CD8-positive, alpha-beta T cell (primary cell): ENCODE measurements at regions of chr2 and their contacts with region 1.

Region 1: GRCh38 chr2:159712143-159712928 is at the start of gene MARCHF7:
- DNase-seq: peak; percentile 94 to 99 (median 97)
- ATAC-seq: peak; percentile 90
- H3K4me3 ChIP-seq: peak within 1 kb of the TSS; percentile 100
- H3K4me3 Mint-ChIP-seq: peak within 1 kb of the TSS; percentile 100
- H3K27ac ChIP-seq: peak within 1 kb of the TSS; percentile 98
- H3K27ac Mint-ChIP-seq: peak within 1 kb of the TSS; percentile 100
- H3K4me1 ChIP-seq: peaks cover 45% of the 10 kb centered on the region
- H3K4me1 Mint-ChIP-seq: peaks cover 54% of the 10 kb centered on the region
- H3K27me3 ChIP-seq: no peaks in the 10 kb centered on the region
- H3K27me3 Mint-ChIP-seq: no peaks in the 10 kb centered on the region
- CTCF ChIP-seq: peak; percentile 25
- total RNA-seq, gene MARCHF7: 76.5 to 76.6 TPM

Region 2: GRCh38 chr2:157876066-157876787 is 1836.1 kb before region 1 on chr2 and contains the start of gene ACVR1:
- CTCF ChIA-PET with region 1: no interaction called
- POLR2A ChIA-PET with region 1: no interaction called
- intact Hi-C with region 1: loop called (anchors 5 kb)
- DNase-seq: peak; percentile 37 to 92 (median 78)
- ATAC-seq: peak; percentile 72
- H3K4me3 ChIP-seq: peak within 1 kb of the TSS; percentile 53 to 74
- H3K4me3 Mint-ChIP-seq: peak within 1 kb of the TSS; percentile 94
- H3K27ac ChIP-seq: peak within 1 kb of the TSS; percentile 1 to 29
- H3K27ac Mint-ChIP-seq: peak within 1 kb of the TSS; percentile 90
- H3K4me1 ChIP-seq: peaks cover 10% of the 10 kb centered on the region
- H3K4me1 Mint-ChIP-seq: peaks cover 48% of the 10 kb centered on the region
- H3K27me3 ChIP-seq: no peaks in the 10 kb centered on the region
- H3K27me3 Mint-ChIP-seq: no peaks in the 10 kb centered on the region
- CTCF ChIP-seq: peak; percentile 27
- total RNA-seq, gene ACVR1: 7.0 to 8.3 TPM

Region 3: GRCh38 chr2:159124441-159124911 is 587.9 kb before region 1 on chr2:
- CTCF ChIA-PET with region 1: no interaction called
- POLR2A ChIA-PET with region 1: interaction called, 3 read pairs
- intact Hi-C with region 1: loop called in 1 of 2 experiments (anchors 1 kb)
- DNase-seq: peak in 4 of 9 experiments; percentile 14 to 51 (median 36)
- ATAC-seq: peak; percentile 73
- H3K4me3 ChIP-seq: no peak overlapping the region
- H3K4me3 Mint-ChIP-seq: no peak overlapping the region
- H3K27ac ChIP-seq: no peak overlapping the region
- H3K27ac Mint-ChIP-seq: peak overlapping the region; percentile 84
- H3K4me1 ChIP-seq: peaks cover 13% of the 10 kb centered on the region
- H3K4me1 Mint-ChIP-seq: peaks cover 23% of the 10 kb centered on the region
- H3K27me3 ChIP-seq: no peaks in the 10 kb centered on the region
- H3K27me3 Mint-ChIP-seq: no peaks in the 10 kb centered on the region
- CTCF ChIP-seq: no peak

Region 4: GRCh38 chr2:159516241-159516766 is 196.0 kb before region 1 on chr2:
- CTCF ChIA-PET with region 1: no interaction called
- POLR2A ChIA-PET with region 1: interaction called, 13 read pairs
- intact Hi-C with region 1: loop called (anchors 1 to 2 kb)
- DNase-seq: peak in 3 of 9 experiments; percentile 29 to 84 (median 74)
- ATAC-seq: peak; percentile 96
- H3K4me3 ChIP-seq: peak overlapping the region; percentile 48 to 50
- H3K4me3 Mint-ChIP-seq: peak overlapping the region; percentile 81
- H3K27ac ChIP-seq: peak overlapping the region; percentile 69 to 72
- H3K27ac Mint-ChIP-seq: peak overlapping the region; percentile 95
- H3K4me1 ChIP-seq: peaks cover 19% of the 10 kb centered on the region
- H3K4me1 Mint-ChIP-seq: peaks cover 38% of the 10 kb centered on the region
- H3K27me3 ChIP-seq: no peaks in the 10 kb centered on the region
- H3K27me3 Mint-ChIP-seq: no peaks in the 10 kb centered on the region
- CTCF ChIP-seq: no peak

Region 5: DNA sequence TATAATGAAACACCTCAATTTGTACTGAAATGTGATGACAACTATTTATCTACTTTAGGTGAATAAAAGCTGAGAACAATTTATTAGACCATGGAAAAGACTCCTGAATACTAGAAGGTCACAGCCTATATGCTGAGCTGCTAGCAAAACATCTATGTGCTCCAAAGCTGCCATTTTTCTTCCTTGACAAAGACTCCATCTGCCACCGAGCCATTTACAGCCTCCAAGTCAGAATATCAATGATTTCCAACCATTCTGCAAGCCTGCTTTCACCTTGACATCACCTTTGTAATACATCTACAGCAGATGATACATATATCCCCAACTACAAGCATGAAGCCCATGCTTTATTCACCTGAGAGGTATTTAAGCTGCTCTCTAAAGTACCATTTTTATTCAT is 180.9 kb before region 1 on chr2:
- CTCF ChIA-PET with region 1: no interaction called
- POLR2A ChIA-PET with region 1: no interaction called
- intact Hi-C with region 1: no loop called
- DNase-seq: no peak
- ATAC-seq: no peak
- H3K4me3 ChIP-seq: no peak overlapping the region
- H3K4me3 Mint-ChIP-seq: no peak overlapping the region
- H3K27ac ChIP-seq: no peak overlapping the region
- H3K27ac Mint-ChIP-seq: no peak overlapping the region
- H3K4me1 ChIP-seq: no peaks in the 10 kb centered on the region
- H3K4me1 Mint-ChIP-seq: no peaks in the 10 kb centered on the region
- H3K27me3 ChIP-seq: no peaks in the 10 kb centered on the region
- H3K27me3 Mint-ChIP-seq: no peaks in the 10 kb centered on the region
- CTCF ChIP-seq: no peak

Region 6: DNA sequence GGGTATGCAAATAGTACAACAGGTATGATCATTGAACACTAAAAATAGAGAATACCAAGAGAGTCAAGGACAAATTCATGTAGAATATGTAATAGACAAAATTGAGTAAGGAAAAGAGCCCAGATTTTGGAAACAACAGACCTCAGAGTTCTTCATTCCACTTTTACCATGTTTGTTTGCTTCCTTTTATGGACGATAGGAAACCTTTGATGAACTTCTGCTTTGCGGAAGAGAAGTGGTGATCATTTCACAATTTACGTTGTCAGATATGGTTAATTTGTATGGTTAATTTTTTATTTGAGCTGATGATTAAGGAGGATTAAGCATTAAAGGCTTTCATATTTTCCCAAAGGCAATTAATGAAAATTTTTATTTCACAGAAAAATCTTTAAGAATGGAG is 16.3 kb after region 1 on chr2:
- CTCF ChIA-PET with region 1: no interaction called
- POLR2A ChIA-PET with region 1: interaction called, 9 read pairs
- intact Hi-C with region 1: loop called in 1 of 2 experiments (anchors 1 kb)
- DNase-seq: no peak
- ATAC-seq: no peak
- H3K4me3 ChIP-seq: no peak overlapping the region
- H3K4me3 Mint-ChIP-seq: no peak overlapping the region
- H3K27ac ChIP-seq: no peak overlapping the region
- H3K27ac Mint-ChIP-seq: no peak overlapping the region
- H3K4me1 ChIP-seq: peaks cover 23% of the 10 kb centered on the region
- H3K4me1 Mint-ChIP-seq: peaks cover 58% of the 10 kb centered on the region
- H3K27me3 ChIP-seq: no peaks in the 10 kb centered on the region
- H3K27me3 Mint-ChIP-seq: no peaks in the 10 kb centered on the region
- CTCF ChIP-seq: no peak

Region 7: GRCh38 chr2:159904127-159904958 is 192.0 kb after region 1 on chr2:
- CTCF ChIA-PET with region 1: no interaction called
- POLR2A ChIA-PET with region 1: interaction called, 14 read pairs
- intact Hi-C with region 1: loop called (anchors 1 to 5 kb)
- DNase-seq: peak; percentile 68 to 90 (median 81)
- ATAC-seq: peak; percentile 81
- H3K4me3 ChIP-seq: peak within 1 kb of the TSS; percentile 91 to 97
- H3K4me3 Mint-ChIP-seq: peak within 1 kb of the TSS; percentile 98
- H3K27ac ChIP-seq: peak within 1 kb of the TSS; percentile 90 to 94
- H3K27ac Mint-ChIP-seq: peak within 1 kb of the TSS; percentile 98
- H3K4me1 ChIP-seq: peaks cover 12% of the 10 kb centered on the region
- H3K4me1 Mint-ChIP-seq: peaks cover 46% of the 10 kb centered on the region
- H3K27me3 ChIP-seq: no peaks in the 10 kb centered on the region
- H3K27me3 Mint-ChIP-seq: no peaks in the 10 kb centered on the region
- CTCF ChIP-seq: no peak

Region 8: DNA sequence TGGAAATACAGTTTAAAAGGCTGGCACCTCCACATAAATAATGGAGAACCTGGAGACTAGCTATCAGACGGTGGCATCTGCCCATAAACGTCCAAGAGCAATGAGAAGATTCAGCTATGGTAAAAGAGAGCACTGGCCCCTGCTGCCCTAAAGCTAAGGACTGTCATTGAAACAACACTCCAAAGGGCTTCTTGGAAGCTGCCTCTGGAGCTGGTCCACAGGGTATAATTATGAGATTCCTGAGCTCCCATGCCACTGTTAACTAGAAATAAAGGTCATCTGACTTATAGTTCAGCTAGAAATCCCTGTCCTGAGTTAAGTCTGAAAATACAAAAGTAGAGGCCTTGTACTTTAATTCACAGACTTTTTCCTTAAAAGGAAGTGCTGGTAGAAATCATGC is 821.1 kb after region 1 on chr2:
- CTCF ChIA-PET with region 1: no interaction called
- POLR2A ChIA-PET with region 1: no interaction called
- intact Hi-C with region 1: no loop called
- DNase-seq: no peak
- ATAC-seq: no peak
- H3K4me3 ChIP-seq: no peak overlapping the region
- H3K4me3 Mint-ChIP-seq: no peak overlapping the region
- H3K27ac ChIP-seq: no peak overlapping the region
- H3K27ac Mint-ChIP-seq: no peak overlapping the region
- H3K4me1 ChIP-seq: no peaks in the 10 kb centered on the region
- H3K4me1 Mint-ChIP-seq: peaks cover 5% of the 10 kb centered on the region
- H3K27me3 ChIP-seq: no peaks in the 10 kb centered on the region
- H3K27me3 Mint-ChIP-seq: no peaks in the 10 kb centered on the region
- CTCF ChIP-seq: no peak

Region 9: DNA sequence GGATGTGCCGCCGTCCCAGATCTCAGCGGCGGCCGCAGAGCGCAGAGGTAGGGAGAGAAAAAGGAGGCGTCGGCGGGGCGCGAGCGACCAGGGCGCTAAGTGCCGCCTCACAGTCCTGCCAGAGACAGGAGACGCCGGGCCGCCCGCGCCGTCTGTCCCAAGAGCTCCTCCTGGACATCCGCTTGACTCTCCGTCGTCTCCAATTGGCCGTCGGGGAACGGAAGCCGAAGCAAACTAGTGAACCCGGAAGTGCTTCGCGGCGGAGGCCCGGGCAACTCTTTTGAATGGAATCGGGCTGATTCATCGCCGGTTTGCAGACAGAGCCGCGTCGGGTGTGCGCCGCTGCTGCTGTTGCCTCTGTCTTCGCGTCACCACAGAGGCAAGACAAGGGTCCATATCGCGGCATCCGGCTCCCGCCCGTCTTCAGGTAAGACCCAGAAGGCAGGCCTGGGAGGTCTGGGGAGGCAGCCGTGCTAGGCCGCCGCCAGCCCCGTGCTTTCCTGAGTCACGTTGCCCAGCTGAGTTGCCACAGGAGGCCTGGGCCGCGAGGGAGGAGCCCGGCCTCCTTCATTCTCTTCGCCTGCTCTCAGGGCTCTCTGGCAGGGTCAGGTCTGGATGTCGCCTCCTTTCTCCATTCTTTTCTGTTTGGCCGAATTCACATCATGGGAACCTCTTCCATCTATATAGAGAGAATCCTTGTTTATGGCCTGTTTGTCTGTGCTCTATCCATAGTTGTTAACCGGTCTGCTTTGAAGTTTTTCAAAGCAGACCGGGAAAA is 1596.0 kb after region 1 on chr2 and contains the start of gene PSMD14:
- CTCF ChIA-PET with region 1: no interaction called
- POLR2A ChIA-PET with region 1: no interaction called
- intact Hi-C with region 1: loop called in 1 of 2 experiments (anchors 5 kb)
- DNase-seq: peak; percentile 75 to 93 (median 88)
- ATAC-seq: peak; percentile 89
- H3K4me3 ChIP-seq: peak within 1 kb of the TSS; percentile 79 to 89
- H3K4me3 Mint-ChIP-seq: peak within 1 kb of the TSS; percentile 96
- H3K27ac ChIP-seq: peak within 1 kb of the TSS; percentile 67 to 89
- H3K27ac Mint-ChIP-seq: peak within 1 kb of the TSS; percentile 97
- H3K4me1 ChIP-seq: peaks cover 20% of the 10 kb centered on the region
- H3K4me1 Mint-ChIP-seq: peaks cover 40% of the 10 kb centered on the region
- H3K27me3 ChIP-seq: no peaks in the 10 kb centered on the region
- H3K27me3 Mint-ChIP-seq: no peaks in the 10 kb centered on the region
- CTCF ChIP-seq: no peak
- total RNA-seq, gene PSMD14: 28.3 to 29.8 TPM